MCF 10A (cell line): ENCODE measurements at regions of chr10 and their contacts with region 1.

Region 1: DNA sequence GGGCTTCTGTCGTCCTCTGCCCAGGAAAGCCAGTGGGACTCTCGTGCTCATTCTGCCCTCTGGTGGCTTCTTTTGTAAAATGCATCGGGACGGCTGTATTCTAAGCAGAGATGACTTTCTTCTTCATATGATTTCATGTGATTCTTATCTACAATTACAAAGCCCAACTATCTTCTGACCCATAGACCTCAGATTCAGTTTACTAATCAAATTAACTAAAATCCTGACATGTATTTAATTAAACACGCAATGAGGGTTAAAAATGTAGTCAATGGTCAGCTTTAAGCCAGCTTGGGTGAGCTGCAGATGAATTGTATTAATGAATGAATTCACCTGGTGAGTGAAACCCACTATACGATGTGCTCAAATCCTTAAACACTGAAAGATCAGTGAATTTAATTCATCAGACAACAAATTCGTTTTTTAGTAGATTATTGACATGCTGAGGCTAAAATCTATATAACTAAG is 117.6 kb upstream of the FAM204A start:
- DNase-seq: peak; percentile 77
- H3K4me3 Mint-ChIP-seq: peak overlapping the region; percentile 41
- H3K27ac Mint-ChIP-seq: no peak overlapping the region
- H3K4me1 Mint-ChIP-seq: no peaks in the 10 kb centered on the region
- H3K27me3 Mint-ChIP-seq: peaks cover 9% of the 10 kb centered on the region
- CTCF ChIP-seq: peak; percentile 55

Region 2: DNA sequence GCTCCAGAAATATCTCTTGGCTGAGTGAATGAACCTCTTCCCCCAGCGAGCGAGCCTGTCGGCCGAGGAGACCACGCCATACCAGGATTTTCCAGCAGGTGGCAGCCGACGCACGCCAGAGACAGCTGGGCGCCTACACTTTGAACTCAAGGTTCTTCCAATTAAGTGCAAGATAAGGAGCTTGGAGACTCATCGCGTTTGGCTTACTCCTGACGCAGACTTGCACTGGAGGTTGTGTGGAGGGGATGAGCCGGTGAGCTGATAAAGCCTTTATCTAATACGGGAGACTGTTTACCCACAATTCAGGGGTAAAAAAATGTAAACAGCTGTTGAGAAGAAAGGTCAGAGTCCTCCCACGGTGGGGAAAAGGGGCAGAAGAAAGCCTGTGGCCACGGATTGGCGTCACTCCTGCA is 963.1 kb before region 1 on chr10:
- CTCF ChIA-PET with region 1: interaction called, 61 read pairs
- POLR2A ChIA-PET with region 1: no interaction called
- intact Hi-C with region 1: loop called (anchors 1 kb)
- DNase-seq: peak; percentile 81
- H3K4me3 Mint-ChIP-seq: no peak overlapping the region
- H3K27ac Mint-ChIP-seq: no peak overlapping the region
- H3K4me1 Mint-ChIP-seq: no peaks in the 10 kb centered on the region
- H3K27me3 Mint-ChIP-seq: peaks cover 33% of the 10 kb centered on the region
- CTCF ChIP-seq: peak; percentile 94

Region 3: DNA sequence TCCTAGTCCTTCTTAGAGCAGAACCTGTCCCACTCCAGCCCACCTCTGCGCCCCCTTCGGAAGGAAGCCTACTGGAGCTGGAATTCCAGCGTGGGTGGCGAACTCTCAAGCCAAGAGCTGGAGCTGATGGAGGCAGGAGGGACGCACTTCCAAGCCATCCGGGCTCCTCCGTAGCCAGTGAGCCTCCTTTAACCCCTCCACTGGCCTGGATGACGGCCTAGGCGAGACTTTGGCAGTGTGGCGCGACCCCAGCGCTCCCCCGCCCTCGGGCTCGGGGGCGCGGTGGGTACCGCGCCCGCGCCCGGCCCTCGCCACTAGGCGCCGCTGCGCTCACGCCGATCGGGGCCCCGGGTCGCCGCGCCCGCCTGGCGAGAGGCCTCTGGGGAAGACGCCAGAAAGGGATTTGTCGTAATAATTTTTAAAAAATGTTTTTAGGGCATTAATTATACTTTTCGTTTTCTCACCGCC is 922.3 kb before region 1 on chr10:
- CTCF ChIA-PET with region 1: interaction called, 10 read pairs
- POLR2A ChIA-PET with region 1: no interaction called
- intact Hi-C with region 1: no loop called
- DNase-seq: no peak
- H3K4me3 Mint-ChIP-seq: no peak overlapping the region
- H3K27ac Mint-ChIP-seq: no peak overlapping the region
- H3K4me1 Mint-ChIP-seq: no peaks in the 10 kb centered on the region
- H3K27me3 Mint-ChIP-seq: peaks cover 33% of the 10 kb centered on the region
- CTCF ChIP-seq: peak; percentile 80

Region 4: DNA sequence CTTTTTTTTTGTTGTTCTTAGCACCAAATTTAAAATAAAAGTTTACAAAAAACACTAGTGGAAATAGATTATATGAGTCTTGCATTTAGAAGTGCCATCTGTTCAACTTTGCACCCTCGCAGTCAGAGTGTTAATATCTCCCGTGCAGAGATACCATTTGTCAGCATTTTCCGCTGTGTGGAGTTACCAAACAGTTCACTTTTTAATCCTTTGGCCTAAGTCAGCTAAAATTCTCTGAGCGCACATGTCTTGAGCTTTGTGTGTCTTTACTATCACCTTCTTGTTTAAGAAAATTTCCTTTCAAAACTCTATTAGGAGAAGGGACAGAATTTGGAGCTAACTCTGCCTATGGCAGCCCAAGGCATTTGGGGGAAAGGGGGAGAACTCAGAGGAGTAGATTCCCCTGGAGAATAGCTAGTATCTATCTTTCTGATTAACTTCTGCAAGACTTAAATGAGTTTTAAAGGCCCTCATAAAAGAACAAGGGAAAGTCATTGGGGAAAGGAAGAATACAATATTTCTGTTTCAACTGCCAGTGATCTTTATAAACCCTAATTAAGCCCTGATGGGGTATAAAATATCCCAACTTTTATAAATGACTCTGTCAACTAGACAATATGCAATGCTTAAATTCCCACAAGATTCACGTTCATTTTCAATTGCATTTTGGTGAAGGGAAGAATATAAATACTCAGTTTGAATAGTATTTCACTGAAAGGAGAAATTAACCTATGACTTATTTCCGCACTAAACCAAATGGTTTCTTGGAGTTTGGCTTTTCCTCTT is 298.1 kb before region 1 on chr10:
- CTCF ChIA-PET with region 1: no interaction called
- POLR2A ChIA-PET with region 1: no interaction called
- intact Hi-C with region 1: no loop called
- DNase-seq: no peak
- H3K4me3 Mint-ChIP-seq: no peak overlapping the region
- H3K27ac Mint-ChIP-seq: no peak overlapping the region
- H3K4me1 Mint-ChIP-seq: no peaks in the 10 kb centered on the region
- H3K27me3 Mint-ChIP-seq: no peaks in the 10 kb centered on the region
- CTCF ChIP-seq: no peak

Region 5: DNA sequence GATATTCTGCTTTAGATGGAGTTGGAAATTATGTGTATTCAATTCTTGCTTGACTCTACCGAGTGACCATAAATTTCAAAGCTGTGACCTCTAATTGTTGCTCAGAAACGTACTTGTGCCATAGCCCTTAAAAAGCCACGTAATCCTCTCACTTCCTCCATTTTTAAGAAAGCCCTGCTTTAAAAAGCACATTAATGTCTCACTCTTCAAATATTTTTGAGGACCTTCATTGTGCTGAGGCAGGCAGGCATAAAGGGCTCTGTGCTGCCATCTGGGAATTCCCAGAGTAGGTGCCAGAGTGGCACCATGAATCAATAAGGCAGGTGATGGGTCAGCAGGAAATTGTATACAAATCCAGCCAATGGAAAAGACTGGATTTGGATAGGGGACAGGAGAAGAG is 19.9 kb before region 1 on chr10:
- CTCF ChIA-PET with region 1: interaction called, 11 read pairs
- POLR2A ChIA-PET with region 1: no interaction called
- intact Hi-C with region 1: no loop called
- DNase-seq: no peak
- H3K4me3 Mint-ChIP-seq: no peak overlapping the region
- H3K27ac Mint-ChIP-seq: no peak overlapping the region
- H3K4me1 Mint-ChIP-seq: no peaks in the 10 kb centered on the region
- H3K27me3 Mint-ChIP-seq: no peaks in the 10 kb centered on the region
- CTCF ChIP-seq: no peak

Region 6: GRCh38 chr10:118471863-118472262 is 12.1 kb after region 1 on chr10:
- CTCF ChIA-PET with region 1: interaction called, 35 read pairs
- POLR2A ChIA-PET with region 1: interaction called, 3 read pairs
- intact Hi-C with region 1: no loop called
- DNase-seq: no peak
- H3K4me3 Mint-ChIP-seq: no peak overlapping the region
- H3K27ac Mint-ChIP-seq: no peak overlapping the region
- H3K4me1 Mint-ChIP-seq: no peaks in the 10 kb centered on the region
- H3K27me3 Mint-ChIP-seq: no peaks in the 10 kb centered on the region
- CTCF ChIP-seq: no peak

Region 7: DNA sequence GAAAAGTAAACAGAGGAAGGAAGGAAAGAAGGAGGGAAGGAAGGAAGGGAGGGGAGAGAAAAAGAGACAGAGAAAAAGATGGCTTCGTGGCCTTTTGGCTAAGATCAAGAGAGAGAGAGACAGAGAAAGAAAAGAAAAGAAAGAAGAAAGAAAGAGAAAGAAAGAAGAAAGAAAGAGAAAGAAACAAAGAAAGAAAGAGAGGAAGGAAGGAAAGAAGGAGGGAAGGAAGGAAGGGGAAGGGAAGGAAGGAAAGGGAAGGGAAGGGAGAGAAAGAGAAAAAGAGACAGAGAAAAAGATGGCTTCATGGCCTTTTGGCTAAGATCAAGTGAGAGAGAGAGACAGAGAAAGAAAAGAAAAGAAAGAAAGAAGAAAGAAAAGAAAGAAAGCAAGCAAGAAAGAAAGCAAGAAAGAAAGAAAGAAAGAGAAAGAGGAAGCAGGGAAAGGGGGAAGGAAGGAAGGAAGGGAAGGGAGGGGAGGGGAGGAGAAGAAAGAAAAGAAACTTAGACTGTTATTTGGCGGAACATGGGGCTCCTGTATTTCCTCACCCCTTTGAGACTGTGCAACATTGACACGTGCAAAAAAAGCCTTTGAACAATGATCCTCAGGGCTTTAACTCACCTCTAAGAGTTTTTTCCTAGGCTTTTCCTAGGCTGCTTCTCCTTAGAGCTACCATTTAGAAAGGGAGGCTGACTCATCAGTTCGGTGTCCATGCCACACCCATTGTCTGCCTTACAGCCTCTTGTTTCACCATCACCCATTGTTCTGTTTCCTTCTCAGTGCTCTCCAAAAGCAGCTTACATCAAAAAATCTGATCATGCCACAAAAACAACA is 44.5 kb after region 1 on chr10:
- CTCF ChIA-PET with region 1: interaction called, 10 read pairs
- POLR2A ChIA-PET with region 1: interaction called, 6 read pairs
- intact Hi-C with region 1: no loop called
- DNase-seq: peak; percentile 97
- H3K4me3 Mint-ChIP-seq: peak overlapping the region; percentile 55
- H3K27ac Mint-ChIP-seq: peak overlapping the region; percentile 96
- H3K4me1 Mint-ChIP-seq: peaks cover 50% of the 10 kb centered on the region
- H3K27me3 Mint-ChIP-seq: no peaks in the 10 kb centered on the region
- CTCF ChIP-seq: no peak

Region 8: DNA sequence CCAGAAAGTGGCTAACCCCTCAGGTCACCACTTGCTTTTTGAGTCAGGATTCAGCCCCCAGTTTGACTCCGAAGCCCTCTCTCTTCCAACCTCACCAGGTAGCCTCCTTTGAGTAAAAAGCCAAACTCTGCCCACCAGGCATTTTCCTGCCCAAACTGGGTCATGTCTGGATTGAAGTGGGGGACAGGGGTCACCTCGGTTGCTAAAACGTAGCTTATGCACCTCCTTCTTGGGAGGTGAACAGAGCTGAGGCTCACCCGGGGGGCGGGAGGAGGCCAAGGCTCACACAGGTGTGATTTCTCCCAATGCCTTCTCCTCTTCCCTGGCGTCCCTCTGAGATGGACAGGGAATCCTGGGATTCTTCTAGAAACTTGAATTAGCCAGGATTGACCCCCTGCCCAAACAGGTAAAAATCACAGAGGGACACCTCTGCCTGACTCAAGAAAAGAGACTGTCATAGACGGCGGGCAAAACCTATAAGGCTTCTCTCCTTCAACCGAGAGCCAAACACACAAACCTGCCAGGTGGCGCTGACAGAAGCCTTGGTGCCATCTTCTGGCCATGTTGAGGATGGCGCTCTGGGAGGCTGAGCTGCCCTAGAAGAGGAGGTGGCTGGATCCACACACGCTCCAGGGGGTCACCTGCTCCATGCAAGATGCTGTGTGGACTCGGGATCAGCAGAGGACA is 84.1 kb after region 1 on chr10:
- CTCF ChIA-PET with region 1: interaction called, 90 read pairs
- POLR2A ChIA-PET with region 1: interaction called, 9 read pairs
- intact Hi-C with region 1: loop called (anchors 1 kb)
- DNase-seq: peak; percentile 81
- H3K4me3 Mint-ChIP-seq: no peak overlapping the region
- H3K27ac Mint-ChIP-seq: no peak overlapping the region
- H3K4me1 Mint-ChIP-seq: no peaks in the 10 kb centered on the region
- H3K27me3 Mint-ChIP-seq: no peaks in the 10 kb centered on the region
- CTCF ChIP-seq: peak; percentile 90

Region 9: GRCh38 chr10:118605694-118606093 is 145.9 kb after region 1 on chr10:
- CTCF ChIA-PET with region 1: no interaction called
- POLR2A ChIA-PET with region 1: no interaction called
- intact Hi-C with region 1: no loop called
- DNase-seq: no peak
- H3K4me3 Mint-ChIP-seq: no peak overlapping the region
- H3K27ac Mint-ChIP-seq: no peak overlapping the region
- H3K4me1 Mint-ChIP-seq: no peaks in the 10 kb centered on the region
- H3K27me3 Mint-ChIP-seq: peaks cover 35% of the 10 kb centered on the region
- CTCF ChIP-seq: no peak

Region 10: GRCh38 chr10:119575506-119575905 is 1115.7 kb after region 1 on chr10:
- CTCF ChIA-PET with region 1: no interaction called
- POLR2A ChIA-PET with region 1: no interaction called
- intact Hi-C with region 1: no loop called
- DNase-seq: peak; percentile 44
- H3K4me3 Mint-ChIP-seq: no peak overlapping the region
- H3K27ac Mint-ChIP-seq: no peak overlapping the region
- H3K4me1 Mint-ChIP-seq: peaks cover 9% of the 10 kb centered on the region
- H3K27me3 Mint-ChIP-seq: no peaks in the 10 kb centered on the region
- CTCF ChIP-seq: no peak